Heart right ventricle (tissue), 16 donors: ENCODE measurements at regions of chr15 and their contacts with region 1.

Region 1: DNA sequence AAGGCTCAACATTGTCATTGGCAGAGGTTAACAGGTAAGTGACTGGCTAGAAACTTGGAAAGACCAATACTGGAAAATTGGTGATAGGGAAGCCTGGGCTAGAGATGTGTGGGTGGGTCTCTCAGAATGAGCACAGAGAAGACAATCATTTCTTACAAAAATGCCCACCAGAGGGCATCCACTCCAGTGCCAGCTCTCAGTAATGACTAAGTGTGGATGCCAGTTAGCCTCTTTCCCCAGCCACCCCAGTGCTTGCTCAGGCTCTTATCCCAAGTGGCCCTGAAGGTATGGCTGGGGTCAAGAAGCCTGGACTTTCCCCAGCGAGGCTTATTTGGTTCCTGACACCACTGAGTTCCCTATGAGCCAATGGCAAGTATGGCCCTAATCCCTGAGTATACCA is 115.9 kb upstream of the ST8SIA2 start:
- DNase-seq: peak in 1 of 2 donors; percentile 8
- ATAC-seq: peak in 6 of 8 donors; percentile 44 to 77 (median 60)
- H3K4me3 ChIP-seq: no peak overlapping the region
- H3K27ac ChIP-seq: no peak overlapping the region
- H3K4me1 ChIP-seq: no peaks in the 10 kb centered on the region
- H3K27me3 ChIP-seq: no peaks in the 10 kb centered on the region
- CTCF ChIP-seq: peak in 8 of 9 donors; percentile 22 to 56 (median 46)

Region 2: DNA sequence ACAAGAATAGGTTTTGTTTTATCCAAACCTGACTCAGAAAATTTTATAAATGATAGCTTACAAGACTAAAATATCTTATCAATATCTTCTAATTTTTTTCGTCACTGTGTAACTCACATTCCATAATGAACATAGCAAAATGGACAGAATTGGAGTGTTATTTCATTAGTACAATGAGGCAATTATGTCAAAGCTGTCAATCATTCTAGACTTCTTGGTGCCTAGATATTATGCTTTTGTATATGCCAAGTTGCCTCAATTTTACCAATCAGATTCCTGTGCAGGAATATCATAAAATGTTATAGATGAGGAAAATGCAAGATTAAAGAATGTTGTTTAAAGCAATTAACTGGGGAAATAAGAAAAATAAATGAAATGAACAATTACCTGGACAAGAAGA is 59.9 kb before region 1 on chr15:
- intact Hi-C with region 1: loop called in 1 of 10 experiments (anchors 10 kb)
- DNase-seq: no peak
- ATAC-seq: no peak
- H3K4me3 ChIP-seq: no peak overlapping the region
- H3K27ac ChIP-seq: no peak overlapping the region
- H3K4me1 ChIP-seq: no peaks in the 10 kb centered on the region
- H3K27me3 ChIP-seq: no peaks in the 10 kb centered on the region
- CTCF ChIP-seq: no peak

Region 3: GRCh38 chr15:92383519-92384326 is 105.9 kb after region 1 on chr15:
- intact Hi-C with region 1: loop called (anchors 5 to 10 kb)
- DNase-seq: peak in 1 of 2 donors; percentile 29
- ATAC-seq: no peak
- H3K4me3 ChIP-seq: no peak overlapping the region
- H3K27ac ChIP-seq: no peak overlapping the region
- H3K4me1 ChIP-seq: no peaks in the 10 kb centered on the region
- H3K27me3 ChIP-seq: peaks cover 0 to 34% (median 21%) of the 10 kb centered on the region in 7 donors
- CTCF ChIP-seq: peak; percentile 24 to 65 (median 59)

Region 4: DNA sequence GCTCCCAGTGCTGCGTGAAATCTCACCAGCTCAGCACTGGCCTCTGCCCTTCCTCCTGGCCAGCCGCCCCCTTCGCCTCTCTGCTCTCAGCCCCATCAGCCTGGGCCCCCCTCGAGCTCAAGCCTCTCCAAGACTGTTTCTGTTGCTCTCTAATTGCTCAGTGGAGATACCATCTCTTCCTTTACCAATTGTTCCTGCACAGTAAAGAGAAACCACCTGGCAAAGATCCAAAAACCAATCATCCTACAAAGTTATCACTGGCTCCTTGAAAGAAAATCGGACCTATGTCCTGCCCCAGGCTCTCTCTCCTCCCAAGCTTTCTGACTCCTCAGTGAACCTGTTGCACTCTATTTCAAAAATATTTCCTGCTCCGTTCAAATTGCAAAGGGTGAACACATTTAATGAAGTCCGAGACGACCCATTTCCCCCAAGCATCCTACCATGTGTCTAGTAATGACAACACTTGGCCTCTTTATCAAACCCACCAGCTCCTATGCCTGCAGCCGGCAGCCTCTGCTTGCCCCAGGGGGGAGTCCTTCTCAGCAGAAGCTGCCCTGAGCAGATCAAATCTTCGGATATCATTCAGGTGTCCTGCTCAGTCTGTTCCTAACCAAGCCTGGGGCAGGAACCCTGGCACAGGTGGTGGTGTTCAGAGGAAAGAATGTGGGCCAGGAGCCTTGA is 431.5 kb after region 1 on chr15:
- intact Hi-C with region 1: loop called in 3 of 10 experiments (anchors 10 kb)
- DNase-seq: no peak
- ATAC-seq: no peak
- H3K4me3 ChIP-seq: no peak overlapping the region
- H3K27ac ChIP-seq: no peak overlapping the region
- H3K4me1 ChIP-seq: peaks cover 0 to 5% (median 0%) of the 10 kb centered on the region in 9 donors
- H3K27me3 ChIP-seq: no peaks in the 10 kb centered on the region
- CTCF ChIP-seq: no peak

Region 5: DNA sequence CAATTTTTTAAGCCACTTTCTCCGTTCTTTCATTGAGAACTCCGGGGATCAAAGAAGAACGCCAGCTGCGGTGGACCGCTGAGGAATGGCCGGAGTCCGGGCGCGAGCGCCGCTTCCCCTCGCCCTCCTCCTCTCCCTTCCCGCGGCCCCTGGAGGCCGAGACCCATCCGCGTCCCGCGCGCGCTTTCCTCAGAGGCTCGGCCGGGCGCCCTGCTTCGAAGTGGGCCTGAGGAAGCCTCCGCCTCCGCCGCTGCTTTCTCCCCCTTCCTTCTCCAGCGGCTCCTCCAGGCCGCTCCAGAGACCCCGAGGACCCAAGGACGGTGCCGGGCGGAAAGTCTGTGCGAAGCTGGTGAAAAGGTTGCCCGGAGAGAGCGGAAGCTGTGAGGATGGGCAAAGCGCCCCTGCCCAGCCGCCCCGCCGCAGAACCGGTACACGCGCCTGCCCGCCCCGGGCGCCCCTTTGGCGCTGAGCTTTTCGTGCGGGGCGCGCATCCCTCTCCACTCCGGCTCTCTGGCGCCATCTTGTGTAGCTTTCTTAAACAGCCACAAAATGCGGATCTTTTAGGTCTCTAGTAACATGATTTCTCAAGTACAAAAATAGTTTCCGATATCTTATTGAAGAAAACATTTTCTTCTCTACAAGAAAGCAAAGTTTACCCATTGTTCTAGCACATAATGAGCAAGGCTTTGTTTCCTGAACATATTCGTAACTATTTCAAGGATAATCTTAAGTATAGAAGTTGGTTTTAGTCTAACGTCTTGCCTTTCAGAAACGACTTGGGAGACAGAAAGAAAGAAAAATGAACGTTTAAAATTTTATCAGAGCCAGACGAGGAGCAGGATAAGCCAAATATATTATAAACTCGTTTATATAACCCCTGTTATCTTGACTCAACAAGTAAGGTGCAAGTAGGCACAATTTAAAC is 437.0 kb after region 1 on chr15:
- intact Hi-C with region 1: loop called in 3 of 10 experiments (anchors 10 kb)
- DNase-seq: peak; percentile 68 to 80
- ATAC-seq: peak; percentile 89 to 95 (median 92)
- H3K4me3 ChIP-seq: peak overlapping the region; percentile 39 to 79 (median 62)
- H3K27ac ChIP-seq: peak overlapping the region in 9 of 10 donors; percentile 19 to 76 (median 66)
- H3K4me1 ChIP-seq: peaks cover 0 to 12% (median 4%) of the 10 kb centered on the region in 9 donors
- H3K27me3 ChIP-seq: no peaks in the 10 kb centered on the region
- CTCF ChIP-seq: peak; percentile 86 to 98 (median 93)

Region 6: DNA sequence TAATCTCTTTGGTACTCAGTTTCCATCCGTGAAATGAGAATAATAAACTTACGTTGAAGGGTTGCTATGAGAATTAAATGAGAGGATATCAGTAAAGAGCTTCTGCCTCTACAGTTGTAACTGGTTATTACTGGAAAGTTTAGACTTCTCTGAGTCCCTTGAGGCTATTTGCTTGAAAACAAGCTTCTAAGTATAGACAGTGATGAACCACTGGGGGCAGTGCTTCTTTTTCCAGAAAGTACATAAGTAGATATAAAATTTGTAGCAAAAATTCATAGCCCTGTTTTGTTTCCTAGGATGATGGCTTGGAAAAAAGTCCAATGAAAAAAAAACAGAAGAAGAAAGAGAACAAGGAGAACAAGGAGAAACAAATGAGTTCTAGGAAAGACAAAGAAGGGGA is 724.1 kb after region 1 on chr15:
- intact Hi-C with region 1: no loop called
- DNase-seq: no peak
- ATAC-seq: peak in 3 of 8 donors; percentile 25 to 58 (median 46)
- H3K4me3 ChIP-seq: no peak overlapping the region
- H3K27ac ChIP-seq: peak overlapping the region in 2 of 10 donors; percentile 30
- H3K4me1 ChIP-seq: peaks cover 0 to 6% (median 0%) of the 10 kb centered on the region in 9 donors
- H3K27me3 ChIP-seq: no peaks in the 10 kb centered on the region
- CTCF ChIP-seq: peak in 5 of 9 donors; percentile 15 to 39 (median 23)